ENCODE measurements at regions of chr17 and their contacts with region 1.

Region 1: GRCh38 chr17:75319904-75320691 is 30.9 kb upstream of the SLC25A19 start:
- DNase-seq: no peak

Region 2: GRCh38 chr17:75405365-75406221 is 85.5 kb after region 1 on chr17 and contains the start of gene GRB2:
- intact Hi-C with region 1: loop called (anchors 2 kb)
- DNase-seq: peak; percentile 93 to 100 (median 99)

Region 3: DNA sequence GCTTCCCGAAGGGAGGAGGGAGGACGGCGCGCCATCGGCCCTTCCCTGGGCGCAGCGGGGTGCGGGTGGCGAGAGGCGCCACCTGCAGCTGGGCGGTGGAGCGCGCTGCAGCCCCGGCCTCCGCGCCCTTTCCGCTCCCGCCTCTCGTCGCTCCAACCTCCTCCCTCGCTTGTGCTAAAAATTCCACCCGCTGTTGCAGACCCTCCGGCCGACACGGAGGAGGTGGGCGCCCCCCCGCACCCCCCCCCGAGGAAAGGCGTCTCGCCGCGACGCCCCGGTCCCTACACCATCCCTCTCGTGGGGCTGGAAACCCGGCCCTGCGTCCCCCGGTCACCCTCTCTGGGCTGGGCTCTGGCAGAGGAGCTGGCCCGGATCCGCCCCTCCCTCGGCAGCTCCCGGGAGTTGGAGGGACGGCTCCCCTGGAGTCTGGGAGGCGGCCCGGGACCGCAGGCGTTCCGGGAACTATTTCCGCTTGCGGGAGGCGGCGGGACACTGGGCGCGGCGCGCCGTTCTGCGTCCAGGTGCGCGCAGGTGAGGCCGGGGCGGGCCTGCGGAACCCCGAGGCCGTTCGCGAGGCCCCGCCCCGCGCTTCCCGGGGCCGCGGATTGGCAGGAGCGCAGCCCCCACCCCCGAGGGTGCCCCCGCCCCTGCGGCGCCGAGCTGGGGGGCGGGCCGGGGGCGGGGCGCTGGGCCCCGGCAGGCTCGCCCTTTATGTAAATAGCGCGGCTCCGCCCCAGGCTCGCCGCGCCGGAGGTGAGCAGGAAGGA is 205.0 kb after region 1 on chr17 and contains the start of gene LLGL2:
- intact Hi-C with region 1: no loop called
- DNase-seq: peak in 36 of 42 donors; percentile 42 to 82 (median 62)